ENCODE measurements at regions of chr3 and their contacts with region 1.

Region 1: DNA sequence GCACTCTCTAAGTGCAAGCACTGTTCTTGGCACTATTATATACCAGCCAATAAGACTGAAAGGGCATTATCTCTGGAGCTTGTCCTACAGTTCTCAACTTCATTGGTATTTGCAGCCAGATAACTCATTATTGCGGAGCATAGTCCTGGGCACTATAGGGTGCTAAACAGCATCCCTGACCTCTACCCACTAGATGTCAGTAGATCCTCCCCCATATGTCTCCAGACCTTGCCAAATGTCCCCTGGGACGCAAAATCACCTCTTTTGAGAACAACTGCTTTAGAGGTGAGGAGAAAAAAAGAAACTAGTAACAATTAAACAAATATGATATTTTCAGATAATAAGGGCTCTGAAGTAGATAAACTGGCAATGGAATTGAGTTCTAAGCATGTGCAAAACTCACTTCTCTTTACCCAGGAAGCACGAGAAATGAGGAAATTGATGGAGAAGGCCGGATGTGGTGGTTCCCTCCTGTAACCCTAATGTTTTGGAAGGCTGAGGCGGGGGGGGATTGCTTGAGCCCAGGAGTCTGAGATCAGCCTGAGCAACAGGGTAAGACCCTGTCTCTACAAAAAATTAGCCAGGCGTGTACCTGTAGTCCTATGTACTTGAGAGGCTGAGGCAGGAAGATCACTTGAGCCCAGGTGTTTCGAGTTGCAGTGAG is 61.4 kb downstream of the FRMD4B start:
- DNase-seq: no peak
- H3K4me3 ChIP-seq: no peak overlapping the region
- H3K27ac ChIP-seq: peak overlapping the region; percentile 18 to 99 (median 96)
- H3K27me3 ChIP-seq: no peaks in the 10 kb centered on the region
- CTCF ChIP-seq: peak in 55 of 56 donors; percentile 17 to 75 (median 54)

Region 2: GRCh38 chr3:69385723-69386555 is 61.4 kb after region 1 on chr3 and contains the start of gene FRMD4B:
- intact Hi-C with region 1: loop called (anchors 5 kb)
- DNase-seq: peak; percentile 36 to 95 (median 92)
- H3K4me3 ChIP-seq: peak within 1 kb of the TSS; percentile 56 to 85 (median 72)
- H3K27ac ChIP-seq: peak within 1 kb of the TSS; percentile 11 to 97 (median 93)
- H3K27me3 ChIP-seq: peaks cover 0 to 32% (median 4%) of the 10 kb centered on the region in 45 donors
- CTCF ChIP-seq: peak in 49 of 56 donors; percentile 18 to 62 (median 43)
- total RNA-seq, gene FRMD4B: 9.0 to 172 (median 40.6) TPM

Region 3: GRCh38 chr3:69410250-69410649 is 85.8 kb after region 1 on chr3:
- intact Hi-C with region 1: loop called in 1 of 2 experiments (anchors 5 kb)
- DNase-seq: peak; percentile 14 to 85 (median 70)
- H3K4me3 ChIP-seq: peak overlapping the region in 7 of 59 donors; percentile 9 to 32 (median 26)
- H3K27ac ChIP-seq: peak overlapping the region in 41 of 59 donors; percentile 0 to 81 (median 63)
- H3K27me3 ChIP-seq: peaks cover 0 to 3% (median 0%) of the 10 kb centered on the region in 45 donors
- CTCF ChIP-seq: peak; percentile 75 to 93 (median 85)

Region 4: GRCh38 chr3:69451594-69451993 is 127.1 kb after region 1 on chr3:
- intact Hi-C with region 1: no loop called
- DNase-seq: no peak
- H3K4me3 ChIP-seq: no peak overlapping the region
- H3K27ac ChIP-seq: peak overlapping the region in 12 of 59 donors; percentile 9 to 51 (median 26)
- H3K27me3 ChIP-seq: peaks cover 0 to 9% (median 0%) of the 10 kb centered on the region in 45 donors
- CTCF ChIP-seq: peak in 11 of 56 donors; percentile 8 to 29 (median 16)

Region 5: GRCh38 chr3:69542221-69543079 is 218.0 kb after region 1 on chr3:
- intact Hi-C with region 1: loop called in 1 of 2 experiments (anchors 10 kb)
- DNase-seq: peak; percentile 9 to 85 (median 80)
- H3K4me3 ChIP-seq: peak overlapping the region; percentile 51 to 88 (median 71)
- H3K27ac ChIP-seq: peak overlapping the region in 57 of 59 donors; percentile 21 to 97 (median 87)
- H3K27me3 ChIP-seq: peaks cover 0 to 32% (median 14%) of the 10 kb centered on the region in 45 donors
- CTCF ChIP-seq: peak in 6 of 56 donors; percentile 12 to 28 (median 18)

Region 6: DNA sequence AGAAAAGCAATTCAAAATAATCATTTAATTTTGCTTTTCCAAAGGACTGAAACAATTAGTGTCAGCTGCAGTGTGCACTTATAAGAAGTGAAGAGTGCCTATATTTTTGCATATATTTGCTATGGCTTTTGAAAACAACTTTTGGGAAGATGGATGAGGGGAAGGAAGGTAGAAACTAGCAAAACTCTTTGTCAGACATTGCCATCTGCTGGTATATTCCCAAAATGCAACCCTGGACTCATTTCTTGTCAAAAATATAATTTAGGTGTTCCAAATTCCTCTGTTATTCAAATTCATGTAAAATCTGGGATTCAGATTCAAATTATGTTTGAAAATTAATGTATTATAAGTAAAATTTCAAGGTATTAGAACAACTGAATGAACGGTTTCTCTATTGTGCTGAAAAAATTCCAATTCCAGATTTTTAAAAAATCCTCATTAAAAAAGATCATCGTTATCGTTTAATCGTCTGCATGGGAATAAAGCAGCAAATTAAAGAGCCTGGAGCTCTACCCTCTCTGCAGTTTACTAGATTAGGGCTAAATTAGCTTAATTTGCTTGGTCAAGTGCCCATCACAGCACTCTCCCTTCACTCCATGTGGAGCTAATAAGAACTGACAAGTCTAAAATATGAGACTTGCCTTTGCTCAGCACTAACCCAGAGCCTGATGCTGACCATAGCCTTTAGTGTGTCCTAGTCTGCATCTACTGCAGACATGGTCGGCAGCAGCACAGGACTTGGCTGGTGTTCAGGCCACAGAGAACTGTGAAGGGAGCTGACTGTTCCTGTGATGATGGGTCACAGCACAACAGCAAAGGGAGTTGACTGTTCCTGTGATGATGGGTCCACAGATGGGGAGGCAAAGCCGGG is 346.8 kb after region 1 on chr3:
- intact Hi-C with region 1: loop called (anchors 10 kb)
- DNase-seq: peak in 2 of 10 donors; percentile 29 to 54
- H3K4me3 ChIP-seq: peak overlapping the region in 1 of 59 donors; percentile 26
- H3K27ac ChIP-seq: peak overlapping the region in 26 of 59 donors; percentile 5 to 75 (median 37)
- H3K27me3 ChIP-seq: peaks cover 0 to 4% (median 0%) of the 10 kb centered on the region in 45 donors
- CTCF ChIP-seq: peak; percentile 65 to 97 (median 86)